ENCODE measurements at regions of chr14 and their contacts with region 1.

Region 1: DNA sequence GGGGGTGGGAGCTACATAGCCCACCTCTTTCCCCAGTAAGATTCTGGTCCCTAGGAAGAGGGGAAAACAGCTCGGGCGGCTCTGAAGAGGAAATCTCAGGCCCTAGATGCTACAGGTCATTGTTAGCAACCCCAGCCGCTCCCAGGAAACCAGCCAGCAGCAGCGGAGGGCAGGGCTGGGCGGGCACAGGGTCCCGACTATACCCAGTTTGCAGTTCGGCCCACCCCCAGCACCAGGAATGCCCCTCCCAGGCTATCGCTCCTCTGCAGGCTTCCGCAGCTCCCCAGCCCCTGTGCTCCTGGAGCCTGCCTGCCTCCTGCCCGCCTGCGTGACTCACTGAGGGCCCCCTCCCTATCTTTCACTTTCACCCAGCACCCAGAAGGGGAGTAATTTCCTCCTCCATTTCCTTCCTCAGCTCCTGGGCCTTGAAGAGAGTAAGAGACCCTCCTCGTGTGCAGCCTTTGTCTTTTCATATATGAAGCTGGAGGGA is 27.2 kb upstream of the PNMA1 start:
- DNase-seq: peak; percentile 79
- ATAC-seq: peak; percentile 71
- H3K4me3 Mint-ChIP-seq: peak overlapping the region; percentile 87
- H3K27ac Mint-ChIP-seq: peak overlapping the region; percentile 99
- H3K4me1 Mint-ChIP-seq: peaks cover 76% of the 10 kb centered on the region
- H3K27me3 Mint-ChIP-seq: no peaks in the 10 kb centered on the region

Region 2: DNA sequence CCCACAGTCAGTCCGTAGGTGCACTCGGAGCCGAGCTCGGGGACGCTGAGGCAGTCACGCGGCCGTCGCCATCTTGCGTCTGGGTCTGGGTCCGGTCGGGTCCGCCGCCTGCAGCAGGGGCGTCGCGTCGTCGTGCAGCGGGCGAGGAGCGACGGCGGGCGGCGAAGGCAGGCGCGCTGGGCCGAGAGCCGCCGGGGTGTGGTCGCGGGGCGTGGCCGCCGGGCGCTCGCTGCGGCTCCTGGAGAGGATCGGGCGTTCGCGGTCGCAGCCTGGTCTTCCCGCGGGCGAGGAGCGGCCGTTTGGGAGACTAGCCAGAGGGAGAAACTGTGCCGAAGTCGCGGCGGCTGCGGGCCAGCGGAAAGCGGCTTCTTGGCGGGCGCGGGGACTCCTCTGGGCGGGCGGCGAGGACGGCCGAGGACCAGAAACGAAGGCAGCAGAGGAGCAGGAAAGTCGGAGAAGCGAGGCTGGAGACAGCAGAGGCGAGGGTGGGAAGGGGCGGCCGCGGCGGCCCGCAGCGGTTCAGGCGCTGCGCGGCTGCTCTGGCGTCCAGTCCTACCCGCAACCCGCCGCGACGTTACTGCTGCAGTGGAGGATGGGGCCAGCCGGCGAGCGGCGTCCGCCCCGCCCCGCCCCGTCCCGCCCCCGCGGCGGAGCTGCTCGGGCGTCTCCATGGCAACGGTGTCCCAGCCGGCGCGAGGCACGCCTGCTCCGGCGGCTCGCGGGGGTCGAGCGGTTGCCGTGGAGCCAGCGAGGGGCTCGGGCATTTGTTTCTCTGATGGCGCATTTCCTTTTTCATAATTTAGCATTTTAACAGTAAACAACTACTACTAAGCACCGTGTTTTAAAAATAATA is 27.4 kb before region 1 on chr14 and contains the start of gene PNMA1:
- CTCF ChIA-PET with region 1: interaction called, 7 read pairs
- POLR2A ChIA-PET with region 1: interaction called, 11 read pairs
- DNase-seq: peak; percentile 90
- ATAC-seq: peak; percentile 79
- H3K4me3 Mint-ChIP-seq: peak within 1 kb of the TSS; percentile 93
- H3K27ac Mint-ChIP-seq: peak within 1 kb of the TSS; percentile 96
- H3K4me1 Mint-ChIP-seq: peaks cover 23% of the 10 kb centered on the region
- H3K27me3 Mint-ChIP-seq: no peaks in the 10 kb centered on the region
- total RNA-seq, gene PNMA1: 24.4 to 25.6 TPM

Region 3: GRCh38 chr14:73753959-73754882 is 12.8 kb after region 1 on chr14:
- CTCF ChIA-PET with region 1: interaction called, 156 read pairs
- POLR2A ChIA-PET with region 1: interaction called, 124 read pairs
- DNase-seq: peak; percentile 73
- ATAC-seq: peak; percentile 42
- H3K4me3 Mint-ChIP-seq: peak overlapping the region; percentile 91
- H3K27ac Mint-ChIP-seq: peak overlapping the region; percentile 90
- H3K4me1 Mint-ChIP-seq: peaks cover 89% of the 10 kb centered on the region
- H3K27me3 Mint-ChIP-seq: no peaks in the 10 kb centered on the region

Region 4: GRCh38 chr14:73759714-73760597 is 18.5 kb after region 1 on chr14:
- CTCF ChIA-PET with region 1: interaction called, 156 read pairs
- POLR2A ChIA-PET with region 1: interaction called, 124 read pairs
- DNase-seq: peak; percentile 96
- ATAC-seq: peak; percentile 86
- H3K4me3 Mint-ChIP-seq: peak overlapping the region; percentile 91
- H3K27ac Mint-ChIP-seq: peak overlapping the region; percentile 95
- H3K4me1 Mint-ChIP-seq: peaks cover 74% of the 10 kb centered on the region
- H3K27me3 Mint-ChIP-seq: no peaks in the 10 kb centered on the region

Region 5: GRCh38 chr14:73785873-73786695 is 44.7 kb after region 1 on chr14:
- CTCF ChIA-PET with region 1: interaction called, 9 read pairs
- POLR2A ChIA-PET with region 1: interaction called, 62 read pairs
- DNase-seq: peak; percentile 83
- ATAC-seq: peak; percentile 68
- H3K4me3 Mint-ChIP-seq: peak overlapping the region; percentile 95
- H3K27ac Mint-ChIP-seq: peak overlapping the region; percentile 94
- H3K4me1 Mint-ChIP-seq: peaks cover 57% of the 10 kb centered on the region
- H3K27me3 Mint-ChIP-seq: no peaks in the 10 kb centered on the region

Region 6: GRCh38 chr14:73825551-73826188 is 84.2 kb after region 1 on chr14:
- CTCF ChIA-PET with region 1: interaction called, 26 read pairs
- POLR2A ChIA-PET with region 1: no interaction called
- DNase-seq: peak; percentile 77
- ATAC-seq: peak; percentile 91
- H3K4me3 Mint-ChIP-seq: no peak overlapping the region
- H3K27ac Mint-ChIP-seq: no peak overlapping the region
- H3K4me1 Mint-ChIP-seq: peaks cover 21% of the 10 kb centered on the region
- H3K27me3 Mint-ChIP-seq: peaks cover 3% of the 10 kb centered on the region

Region 7: DNA sequence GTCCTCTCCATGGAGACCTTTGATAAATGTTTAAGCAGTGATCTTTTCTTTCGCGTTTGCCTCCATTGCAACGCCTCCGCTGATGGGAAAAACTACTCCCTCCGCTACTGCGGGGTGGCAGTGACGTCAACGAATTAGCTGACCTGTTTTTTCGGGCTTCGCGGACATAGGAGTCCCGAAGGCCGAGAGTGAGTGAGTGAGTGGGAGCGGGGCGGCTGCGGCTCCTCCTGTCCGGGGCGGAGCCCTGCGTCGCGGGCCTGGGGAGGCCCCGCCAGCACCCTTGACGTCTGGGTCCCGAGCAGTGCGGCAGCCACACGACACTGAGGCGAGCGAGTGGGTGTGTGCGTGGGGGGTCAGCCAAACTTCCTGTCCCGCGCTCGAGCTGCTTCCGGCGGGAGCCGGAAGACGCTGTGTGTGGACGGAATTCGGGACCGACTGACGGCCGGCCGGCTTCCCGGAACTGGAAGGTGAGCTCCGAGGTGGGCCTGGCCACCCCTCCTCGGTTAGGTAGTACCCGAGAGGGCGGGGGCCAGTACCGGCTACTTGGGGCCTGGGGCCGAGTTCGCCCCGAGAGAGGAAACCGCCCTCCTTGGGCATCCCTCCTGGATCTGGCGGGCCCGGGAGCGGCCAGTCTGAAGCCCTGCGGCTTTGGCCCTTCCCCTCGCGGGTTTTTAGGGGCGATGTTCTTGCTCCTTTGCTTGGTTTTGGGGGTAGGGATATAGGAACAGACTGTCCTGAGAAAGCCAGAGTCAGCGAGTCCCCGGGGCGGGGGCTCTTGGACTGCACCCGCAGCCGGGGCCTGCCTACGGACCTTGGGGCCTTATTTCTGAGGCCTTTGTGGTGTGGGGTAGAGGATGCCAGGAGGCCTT is 145.3 kb after region 1 on chr14 and contains the start of gene ZNF410:
- CTCF ChIA-PET with region 1: no interaction called
- POLR2A ChIA-PET with region 1: interaction called, 15 read pairs
- DNase-seq: peak; percentile 88
- ATAC-seq: peak; percentile 99
- H3K4me3 Mint-ChIP-seq: peak within 1 kb of the TSS; percentile 97
- H3K27ac Mint-ChIP-seq: peak within 1 kb of the TSS; percentile 97
- H3K4me1 Mint-ChIP-seq: peaks cover 37% of the 10 kb centered on the region
- H3K27me3 Mint-ChIP-seq: no peaks in the 10 kb centered on the region
- total RNA-seq, gene ZNF410: 49.7 to 50.2 TPM

Region 8: DNA sequence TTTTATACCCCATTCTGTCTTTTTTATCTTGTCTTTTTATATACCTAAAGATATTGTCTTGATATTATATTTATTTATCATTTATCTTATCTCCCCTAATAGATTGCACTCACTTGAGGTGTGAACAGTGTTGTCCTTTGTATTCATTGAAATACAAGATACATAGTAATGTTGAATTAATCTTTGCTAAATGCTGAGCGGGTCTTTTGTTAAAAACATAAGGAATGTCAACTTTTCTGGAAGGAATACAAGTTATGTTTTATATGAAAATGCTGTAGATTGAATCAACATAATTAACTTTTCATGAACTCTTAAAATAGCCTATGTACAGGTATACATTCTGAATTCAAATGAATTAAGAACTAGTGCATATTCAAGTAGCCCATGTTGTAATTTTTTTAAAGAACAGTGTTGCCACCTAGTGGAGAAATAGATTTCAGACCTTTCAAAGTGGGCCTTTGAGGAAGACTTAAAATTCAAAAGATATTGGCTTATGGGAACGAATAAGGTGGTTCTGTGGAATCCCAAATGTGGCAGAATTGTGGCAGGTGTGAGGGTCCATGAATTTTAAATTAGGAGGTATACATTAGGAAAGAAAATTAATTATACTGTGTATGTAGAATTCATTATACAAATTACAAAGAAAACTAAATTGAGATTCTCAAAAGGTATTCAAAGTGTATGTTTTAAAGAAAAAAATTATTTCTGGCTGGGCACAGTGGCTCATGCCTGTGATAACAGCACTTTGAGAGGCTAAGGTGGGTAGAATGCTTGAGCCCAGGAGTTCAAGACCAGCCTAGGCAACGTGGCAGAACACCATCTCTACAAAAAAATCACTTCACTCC is 296.8 kb after region 1 on chr14:
- CTCF ChIA-PET with region 1: no interaction called
- POLR2A ChIA-PET with region 1: no interaction called
- DNase-seq: peak; percentile 26
- ATAC-seq: peak; percentile 61
- H3K4me3 Mint-ChIP-seq: no peak overlapping the region
- H3K27ac Mint-ChIP-seq: no peak overlapping the region
- H3K4me1 Mint-ChIP-seq: no peaks in the 10 kb centered on the region
- H3K27me3 Mint-ChIP-seq: no peaks in the 10 kb centered on the region

Measured in activated CD8-positive, alpha-beta T cell treated with anti-CD3 and anti-CD28 coated beads, Interleukin-2, amount 10 ng/mL, durations not matched to agents 7 days and 5 days (primary cell).